ENCODE measurements at regions of chr9 and their contacts with region 1.

Region 1: DNA sequence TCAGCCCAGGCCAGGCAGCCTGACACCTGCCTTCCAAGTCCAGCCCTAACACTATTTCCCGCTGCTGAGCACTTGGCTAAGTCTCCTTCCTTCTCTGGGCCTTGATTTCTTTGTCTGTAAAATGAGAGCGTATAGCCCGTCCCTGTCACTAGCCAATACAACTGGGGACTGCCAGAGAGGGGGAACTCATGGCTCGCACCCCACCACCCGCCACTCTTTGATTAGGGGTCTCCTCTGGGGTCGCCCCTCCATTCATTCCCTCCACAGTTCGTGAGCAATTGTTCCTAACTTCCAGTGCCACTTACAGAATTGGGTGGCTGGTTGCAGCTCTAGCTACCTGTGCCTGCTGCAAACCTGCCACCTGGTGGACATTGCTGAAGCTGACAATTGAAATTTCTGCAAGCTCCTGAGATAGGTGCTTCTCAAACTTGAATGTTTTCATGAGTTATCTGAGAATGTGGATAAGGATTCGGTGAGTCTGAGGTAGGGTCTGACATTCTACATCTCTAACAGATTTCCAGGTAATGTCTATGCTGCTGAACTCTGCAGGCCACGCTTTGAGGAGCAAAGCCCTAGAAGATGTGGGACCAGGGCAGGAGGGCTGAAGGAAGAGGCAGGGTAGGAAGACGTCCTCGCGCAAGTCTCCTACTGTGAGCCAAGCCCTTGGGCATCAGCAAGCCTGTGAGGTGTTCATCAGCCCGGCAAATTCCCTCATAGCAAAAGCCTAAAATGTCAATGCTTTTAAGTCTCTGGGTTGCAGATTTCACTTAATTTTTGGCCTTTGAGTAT is 13.3 kb upstream of the RECK start:
- DNase-seq: peak; percentile 66 to 79
- H3K4me3 ChIP-seq: no peak overlapping the region
- H3K4me1 ChIP-seq: peaks cover 3% of the 10 kb centered on the region; the same call in 1 of the 2 replicates
- H3K27me3 ChIP-seq: no peaks in the 10 kb centered on the region

Region 2: GRCh38 chr9:35882263-35882848 is 141.1 kb before region 1 on chr9:
- in situ Hi-C with region 1: no loop called
- DNase-seq: peak; percentile 65 to 91
- H3K4me3 ChIP-seq: no peak overlapping the region
- H3K4me1 ChIP-seq: peaks cover 7% of the 10 kb centered on the region
- H3K27me3 ChIP-seq: peaks cover 7% of the 10 kb centered on the region

Region 3: GRCh38 chr9:35903049-35903448 is 120.4 kb before region 1 on chr9:
- in situ Hi-C with region 1: loop called (anchors 10 kb)
- DNase-seq: peak; percentile 48 to 50
- H3K4me3 ChIP-seq: no peak overlapping the region
- H3K4me1 ChIP-seq: peaks cover 10% of the 10 kb centered on the region
- H3K27me3 ChIP-seq: peaks cover 16% of the 10 kb centered on the region

Region 4: DNA sequence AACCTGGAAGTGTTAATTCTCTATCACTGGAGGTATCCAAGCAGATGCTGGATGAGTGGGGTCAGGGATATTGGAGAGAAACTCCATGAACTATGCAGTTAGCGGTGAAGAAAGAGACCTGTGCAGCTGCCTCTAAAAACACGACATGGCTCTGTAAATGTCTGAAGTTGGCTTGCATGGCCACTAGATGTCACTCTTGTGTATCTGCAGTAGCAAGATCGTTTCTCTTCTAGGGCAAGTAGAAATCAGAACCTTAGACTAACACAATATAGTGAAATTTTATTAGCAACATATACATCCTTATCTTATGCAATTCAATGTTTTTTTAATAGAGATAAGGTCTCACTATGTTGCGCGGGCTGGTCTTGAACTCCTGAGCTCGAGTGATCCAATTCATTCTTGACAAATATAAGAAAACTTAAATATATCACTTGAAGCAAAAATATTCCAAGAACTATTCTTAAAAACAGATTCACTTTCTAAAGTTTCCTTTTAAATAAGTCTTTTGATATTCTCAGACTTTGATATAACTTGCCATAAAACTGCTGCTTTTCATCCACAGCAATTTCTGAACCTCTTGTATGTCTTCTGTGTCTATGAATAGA is 68.4 kb before region 1 on chr9:
- in situ Hi-C with region 1: loop called (anchors 5 kb)
- DNase-seq: peak; percentile 67 to 88
- H3K4me3 ChIP-seq: no peak overlapping the region
- H3K4me1 ChIP-seq: peaks cover 11% of the 10 kb centered on the region
- H3K27me3 ChIP-seq: peaks cover 38% of the 10 kb centered on the region

Region 5: GRCh38 chr9:36080519-36080918 is 57.1 kb after region 1 on chr9:
- in situ Hi-C with region 1: loop called (anchors 10 kb)
- DNase-seq: no peak
- H3K4me3 ChIP-seq: no peak overlapping the region
- H3K4me1 ChIP-seq: no peaks in the 10 kb centered on the region
- H3K27me3 ChIP-seq: no peaks in the 10 kb centered on the region

Measured in HAP-1 (cell line).